Posterior vena cava (tissue), 2 donors: ENCODE measurements at regions of chr5 and their contacts with region 1.

Region 1: DNA sequence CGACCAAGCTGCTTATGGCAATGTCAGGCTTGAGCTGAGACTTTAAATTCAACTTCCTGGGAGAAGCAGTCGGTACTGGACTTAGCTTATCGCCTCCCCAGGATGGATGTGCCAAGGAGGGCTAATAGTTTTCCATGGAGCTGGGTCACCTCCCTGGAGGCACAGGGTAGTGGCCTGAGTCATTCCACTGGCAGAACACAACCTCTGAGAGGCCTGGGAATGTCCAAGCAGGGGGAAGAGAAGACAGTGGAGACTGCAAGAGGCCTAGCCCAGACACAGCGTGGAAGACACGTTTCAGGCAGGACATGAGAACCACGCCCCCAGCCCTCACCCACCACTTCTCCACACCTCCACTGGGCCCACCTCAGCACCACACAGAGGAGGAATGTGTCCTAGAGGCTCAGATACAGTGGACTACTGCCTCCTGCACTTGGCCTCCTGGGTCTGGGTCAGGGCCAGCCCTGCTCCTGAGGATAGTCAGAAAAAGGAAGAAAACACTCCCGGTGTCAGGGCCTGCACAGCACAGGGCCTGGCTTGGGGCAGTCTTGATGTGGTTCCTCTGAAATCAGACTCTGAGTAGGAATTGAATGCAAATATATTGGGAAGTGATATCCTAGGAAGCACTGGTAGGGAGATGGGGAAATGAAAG is 171.8 kb downstream of the FSTL4 start:
- DNase-seq: no peak

Region 2: GRCh38 chr5:133370036-133370831 is 70.4 kb before region 1 on chr5:
- intact Hi-C with region 1: no loop called
- DNase-seq: no peak

Region 3: DNA sequence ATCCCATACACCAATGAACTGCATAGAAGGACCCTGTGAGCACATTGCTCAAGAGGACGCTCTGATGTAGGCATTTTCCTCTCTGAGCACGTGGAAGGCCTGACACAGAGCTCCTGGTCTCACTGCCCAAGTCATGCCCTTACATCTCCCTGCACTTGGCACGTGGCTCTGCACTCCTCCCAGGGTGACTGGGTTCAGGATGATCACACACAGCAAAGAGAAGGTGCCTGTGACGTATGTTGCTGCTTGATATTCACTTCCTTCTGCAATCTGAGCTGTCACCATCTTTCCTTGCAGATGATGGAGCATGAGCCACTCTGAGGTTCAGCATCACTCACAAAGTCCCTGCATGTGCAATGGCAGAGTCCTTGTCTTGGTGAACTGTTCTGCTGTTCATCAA is 46.5 kb after region 1 on chr5:
- intact Hi-C with region 1: loop called in 1 of 2 experiments (anchors 2 kb)
- DNase-seq: no peak